Ovary (tissue), 10 donors: ENCODE measurements at regions of chr4 and their contacts with region 1.

Region 1: DNA sequence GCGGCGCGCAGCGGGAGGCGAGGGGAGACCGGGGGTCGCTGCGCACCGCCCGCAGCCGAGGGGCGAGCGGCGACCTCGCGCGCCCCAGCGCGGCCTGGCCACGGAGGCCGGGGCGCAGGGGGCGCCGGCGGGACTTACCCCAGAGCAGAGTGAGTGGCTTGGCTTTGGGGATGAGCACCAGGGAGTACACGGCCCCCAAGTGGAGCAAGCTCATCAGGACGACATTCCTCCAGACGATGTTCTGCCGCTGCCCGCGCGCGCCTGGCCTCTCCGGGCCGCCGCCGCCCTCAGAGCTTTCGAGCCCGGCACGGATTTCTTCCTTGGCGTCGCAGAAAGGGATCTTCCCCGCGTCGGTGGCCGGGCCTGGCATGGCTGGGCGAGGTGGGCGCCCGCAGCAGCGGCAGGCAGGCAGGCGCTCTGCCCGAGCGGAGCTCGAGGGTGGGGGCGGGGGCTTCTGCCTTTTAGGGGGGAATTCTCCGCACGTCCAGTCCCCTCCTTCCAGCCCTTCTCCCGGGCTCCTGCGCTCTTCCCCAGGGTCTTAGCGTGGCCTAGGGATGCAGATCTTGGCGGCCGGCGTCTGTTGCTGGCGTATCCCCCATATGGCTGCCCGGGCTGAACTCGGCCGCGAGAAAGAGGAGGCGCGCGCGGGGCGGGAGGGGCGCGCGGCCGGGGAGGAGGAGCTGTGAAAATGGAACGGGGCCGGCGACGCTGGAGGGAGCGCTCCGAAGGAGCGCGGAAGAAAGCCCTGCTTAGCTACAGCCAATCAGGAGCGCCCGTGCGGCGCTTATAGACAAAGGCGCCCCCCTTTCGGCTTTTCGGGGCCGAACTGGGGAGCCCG is at the start of gene SCD5:
- DNase-seq: peak; percentile 82 to 87 (median 83)
- H3K4me3 ChIP-seq: peak within 1 kb of the TSS; percentile 80
- H3K27ac ChIP-seq: peak within 1 kb of the TSS; percentile 57 to 86
- H3K4me1 ChIP-seq: peaks cover 10% of the 10 kb centered on the region
- H3K27me3 ChIP-seq: no peaks in the 10 kb centered on the region
- CTCF ChIP-seq: no peak
- EP300 ChIP-seq: no peak
- POLR2A ChIP-seq: peak; percentile 40
- total RNA-seq, gene SCD5: 96.3 to 203 (median 119) TPM

Region 2: DNA sequence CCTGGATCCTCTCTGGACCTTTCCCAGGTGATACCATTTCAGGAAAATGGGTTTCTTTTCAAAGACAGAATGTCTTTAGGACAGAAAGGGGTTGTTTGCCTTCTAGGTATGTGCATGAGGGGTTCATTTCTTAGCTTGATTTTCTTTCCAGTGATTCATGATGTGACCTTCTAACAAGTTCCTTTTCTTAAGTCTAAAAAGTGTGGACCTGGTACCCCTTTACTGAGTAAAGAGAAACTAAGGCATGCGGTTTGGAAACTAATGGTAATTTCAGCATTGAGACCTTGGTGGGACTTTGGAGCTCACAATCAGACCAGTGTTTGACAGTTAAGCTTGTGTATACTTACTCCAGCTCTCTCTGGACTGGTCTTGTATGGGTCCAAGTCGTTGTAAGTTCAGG is 359.3 kb before region 1 on chr4:
- intact Hi-C with region 1: no loop called
- DNase-seq: no peak
- H3K4me3 ChIP-seq: no peak overlapping the region
- H3K27ac ChIP-seq: no peak overlapping the region
- H3K4me1 ChIP-seq: no peaks in the 10 kb centered on the region
- H3K27me3 ChIP-seq: no peaks in the 10 kb centered on the region
- CTCF ChIP-seq: no peak
- EP300 ChIP-seq: no peak
- POLR2A ChIP-seq: no peak

Region 3: DNA sequence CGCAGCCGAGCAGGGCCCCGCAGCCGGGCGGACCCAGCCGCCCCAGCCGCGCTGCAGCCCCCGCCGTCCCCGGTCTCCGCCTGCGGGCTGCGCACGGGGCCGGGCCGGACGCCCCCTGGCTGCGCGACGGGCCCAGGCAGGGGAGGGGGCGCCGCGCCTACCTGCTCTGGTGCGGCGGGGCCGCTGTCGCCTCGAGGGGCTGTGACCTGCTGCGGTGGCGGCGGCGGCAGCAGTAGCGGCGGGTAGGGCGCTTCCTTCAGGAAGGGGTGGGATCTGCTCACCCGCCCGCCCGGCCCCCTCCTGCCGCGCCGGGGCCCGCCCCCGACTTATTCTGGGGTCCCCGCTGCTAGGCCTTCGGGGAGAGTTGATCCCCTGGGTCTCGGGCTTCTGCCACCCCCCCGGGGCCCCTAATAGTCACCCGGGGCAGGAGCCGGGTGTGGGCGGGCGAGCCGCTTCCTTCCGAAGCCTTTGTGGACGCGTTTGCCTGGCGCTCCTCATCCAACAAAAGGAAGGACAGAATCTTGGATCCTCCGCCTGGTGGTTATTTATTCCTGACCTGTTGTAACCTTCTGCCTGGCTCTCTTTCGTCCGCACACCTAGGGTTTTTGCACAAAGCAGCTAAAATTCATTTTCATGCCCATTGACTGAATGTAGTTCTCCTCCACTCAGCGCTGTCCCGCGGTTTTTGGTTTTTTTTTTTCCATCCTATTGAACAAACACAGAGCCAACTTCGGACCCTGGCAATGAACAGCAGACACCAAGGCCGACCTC is 236.5 kb before region 1 on chr4 and contains the start of gene TMEM150C:
- intact Hi-C with region 1: loop called in 1 of 4 experiments (anchors 10 kb)
- DNase-seq: peak; percentile 37 to 58 (median 53)
- H3K4me3 ChIP-seq: peak within 1 kb of the TSS; percentile 43
- H3K27ac ChIP-seq: peak within 1 kb of the TSS; percentile 33 to 90
- H3K4me1 ChIP-seq: peaks cover 5% of the 10 kb centered on the region
- H3K27me3 ChIP-seq: no peaks in the 10 kb centered on the region
- CTCF ChIP-seq: peak in 2 of 3 donors; percentile 15 to 20
- EP300 ChIP-seq: no peak
- POLR2A ChIP-seq: no peak
- total RNA-seq, gene TMEM150C: 13.5 to 48.8 (median 31.4) TPM

Region 4: DNA sequence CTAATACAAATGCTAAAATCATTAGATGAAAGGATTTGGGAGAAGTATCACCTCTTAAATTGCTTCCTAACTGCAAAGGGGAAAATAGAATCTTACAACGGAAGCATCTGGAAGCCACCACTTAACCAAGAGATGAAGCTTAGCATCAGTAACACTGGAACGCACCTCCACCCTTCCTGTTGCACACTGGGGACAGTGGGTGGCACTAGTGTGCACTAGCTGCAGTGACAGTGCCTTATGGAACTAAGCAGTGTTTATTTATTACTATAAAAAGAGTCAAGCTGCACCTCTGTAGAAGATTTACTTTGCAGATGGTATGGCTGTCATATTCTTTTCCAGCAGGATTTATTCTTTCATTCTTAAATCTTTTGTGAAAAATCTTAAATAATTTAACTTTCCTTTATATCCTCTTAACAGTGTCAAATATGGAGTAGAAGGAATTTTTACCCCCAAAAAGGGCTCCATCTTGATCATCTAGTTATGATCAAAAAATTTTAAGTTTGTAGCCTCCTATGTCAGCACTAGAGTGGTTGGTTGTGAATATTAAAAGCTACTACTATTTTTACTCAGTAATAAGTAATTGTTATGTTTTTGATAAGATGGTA is 76.5 kb before region 1 on chr4:
- intact Hi-C with region 1: loop called in 1 of 4 experiments (anchors 10 kb)
- DNase-seq: no peak
- H3K4me3 ChIP-seq: no peak overlapping the region
- H3K27ac ChIP-seq: peak overlapping the region in 1 of 2 donors; percentile 76
- H3K4me1 ChIP-seq: peaks cover 28% of the 10 kb centered on the region
- H3K27me3 ChIP-seq: no peaks in the 10 kb centered on the region
- CTCF ChIP-seq: peak in 1 of 3 donors; percentile 22
- EP300 ChIP-seq: no peak
- POLR2A ChIP-seq: no peak

Region 5: DNA sequence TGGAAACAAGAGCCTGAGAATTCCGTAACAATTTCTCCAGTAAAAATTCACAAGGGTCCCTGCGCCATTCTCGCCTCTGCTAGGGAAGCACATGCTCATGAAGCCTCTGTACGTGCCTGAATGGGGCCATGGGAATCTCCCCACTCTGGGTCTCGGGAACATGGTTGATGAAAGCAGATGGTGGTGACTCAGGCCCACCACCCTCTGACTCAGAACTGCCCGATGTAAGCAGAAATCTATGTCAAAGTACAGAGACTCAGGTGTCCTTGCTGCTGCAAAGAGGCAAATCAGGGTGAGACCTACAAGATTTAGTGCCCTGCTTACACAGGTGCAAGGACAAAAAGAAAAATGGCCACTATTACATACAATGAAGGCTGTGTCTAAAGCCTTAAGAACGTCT is 64.8 kb before region 1 on chr4:
- intact Hi-C with region 1: loop called in 2 of 4 experiments (anchors 5 to 10 kb)
- DNase-seq: peak in 1 of 5 donors; percentile 46
- H3K4me3 ChIP-seq: no peak overlapping the region
- H3K27ac ChIP-seq: no peak overlapping the region
- H3K4me1 ChIP-seq: peaks cover 18% of the 10 kb centered on the region
- H3K27me3 ChIP-seq: no peaks in the 10 kb centered on the region
- CTCF ChIP-seq: no peak
- EP300 ChIP-seq: no peak
- POLR2A ChIP-seq: no peak

Region 6: GRCh38 chr4:82890901-82891706 is 92.7 kb after region 1 on chr4 and contains the start of gene SEC31A:
- intact Hi-C with region 1: loop called in 1 of 4 experiments (anchors 10 kb)
- DNase-seq: peak; percentile 93 to 97 (median 95)
- H3K4me3 ChIP-seq: peak within 1 kb of the TSS; percentile 76
- H3K27ac ChIP-seq: peak within 1 kb of the TSS; percentile 39 to 93
- H3K4me1 ChIP-seq: peaks cover 12% of the 10 kb centered on the region
- H3K27me3 ChIP-seq: no peaks in the 10 kb centered on the region
- CTCF ChIP-seq: no peak
- EP300 ChIP-seq: no peak
- POLR2A ChIP-seq: peak; percentile 93
- total RNA-seq, gene SEC31A: 175 to 315 (median 287) TPM

Region 7: DNA sequence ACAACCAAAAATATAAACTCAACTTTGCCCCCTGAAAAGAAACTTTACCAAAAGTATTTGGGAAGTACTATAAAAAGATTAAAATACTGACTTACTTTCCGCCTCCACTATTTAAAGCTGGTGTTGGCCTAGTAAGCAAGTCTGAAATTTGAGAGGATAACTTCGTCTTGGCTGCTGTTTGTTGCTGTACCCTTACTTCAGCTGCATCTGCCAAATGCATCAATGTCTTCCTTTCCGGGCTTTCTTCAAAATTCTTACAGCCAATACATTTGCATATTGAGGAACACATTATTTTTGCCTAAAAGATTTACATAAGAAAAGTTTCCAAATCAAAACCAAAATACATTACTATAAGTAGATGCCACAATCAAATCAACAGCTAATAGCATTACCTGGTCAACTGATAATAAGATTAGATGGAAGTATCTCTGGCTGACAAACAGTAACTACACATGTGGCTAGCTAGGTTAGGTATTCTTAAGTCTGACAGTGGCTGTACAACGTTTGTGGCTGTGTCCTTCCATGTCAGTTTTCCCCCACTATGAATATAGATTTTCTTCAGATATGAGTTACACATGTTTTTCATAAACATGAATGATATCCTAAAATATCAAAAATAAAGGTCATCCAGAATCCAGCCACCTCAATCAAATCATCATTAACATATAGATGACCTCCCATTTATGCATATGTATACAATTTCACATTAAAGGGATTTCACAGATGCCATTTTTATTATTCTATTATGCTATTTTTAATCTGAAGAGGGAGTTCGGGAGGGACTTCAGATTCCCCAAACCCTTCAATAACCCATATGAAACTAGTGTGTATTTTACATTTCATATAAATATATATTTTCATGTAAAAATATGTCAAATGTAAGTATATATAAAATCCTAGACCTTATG is 132.7 kb after region 1 on chr4:
- intact Hi-C with region 1: no loop called
- DNase-seq: no peak
- H3K4me3 ChIP-seq: no peak overlapping the region
- H3K27ac ChIP-seq: no peak overlapping the region
- H3K4me1 ChIP-seq: no peaks in the 10 kb centered on the region
- H3K27me3 ChIP-seq: no peaks in the 10 kb centered on the region
- CTCF ChIP-seq: no peak
- EP300 ChIP-seq: no peak
- POLR2A ChIP-seq: no peak

Region 8: DNA sequence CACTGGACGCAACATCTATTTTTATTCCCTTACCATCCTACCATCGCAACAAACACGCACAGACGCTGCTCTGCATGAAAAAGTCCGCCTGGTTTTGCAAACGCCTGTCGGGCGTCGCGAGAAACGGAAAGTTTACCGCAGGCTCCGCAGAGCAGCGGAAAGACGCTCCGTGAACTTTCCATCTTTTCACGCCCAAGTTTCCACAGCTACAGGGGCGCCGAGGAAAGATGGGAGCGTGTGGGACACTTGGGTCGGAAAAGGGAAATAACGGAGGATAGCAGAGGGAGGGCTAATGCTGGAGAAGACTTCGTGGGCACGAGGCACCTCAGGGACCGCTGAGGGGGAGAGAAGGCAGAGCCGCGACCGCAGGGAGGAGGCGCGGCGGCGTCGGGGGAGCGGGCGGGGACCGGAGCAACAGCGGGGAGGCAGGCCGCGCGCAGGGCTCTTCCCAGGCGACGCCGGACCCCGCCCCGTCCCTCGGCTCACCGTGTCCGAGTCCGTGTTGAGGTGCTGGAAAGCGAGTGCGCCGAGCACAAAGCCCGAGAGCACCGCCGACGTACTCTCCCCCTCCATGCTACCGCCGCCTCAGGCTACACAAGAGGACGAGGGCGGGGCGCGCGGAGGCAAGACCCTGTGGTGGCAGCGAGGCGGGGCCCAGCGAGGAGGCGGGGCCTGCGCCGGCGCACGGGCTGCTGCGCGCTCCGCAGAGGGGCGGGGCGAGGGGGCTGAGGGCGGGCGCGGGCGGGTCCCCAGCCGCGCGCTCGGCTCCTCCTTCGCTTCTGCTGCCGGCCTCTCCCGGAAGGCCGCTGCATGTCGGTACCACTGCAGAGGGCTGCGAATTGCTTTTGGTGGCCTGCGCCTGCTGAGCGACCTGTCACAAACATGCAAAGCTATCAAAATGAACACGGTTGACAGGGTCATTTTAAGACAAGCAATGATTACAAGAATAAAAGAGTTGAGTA is 686.4 kb after region 1 on chr4 and contains the start of gene ABRAXAS1:
- intact Hi-C with region 1: no loop called
- DNase-seq: peak; percentile 94 to 96 (median 95)
- H3K4me3 ChIP-seq: peak within 1 kb of the TSS; percentile 74
- H3K27ac ChIP-seq: peak within 1 kb of the TSS; percentile 56 to 92
- H3K4me1 ChIP-seq: peaks cover 2% of the 10 kb centered on the region
- H3K27me3 ChIP-seq: no peaks in the 10 kb centered on the region
- CTCF ChIP-seq: no peak
- EP300 ChIP-seq: no peak
- POLR2A ChIP-seq: peak; percentile 87
- total RNA-seq, gene ABRAXAS1: 14.5 to 43.1 (median 33.8) TPM